CD8-positive, alpha-beta memory T cell (primary cell): ENCODE measurements at regions of chrX and their contacts with region 1.

Region 1: GRCh38 chrX:154428176-154429010 is at the start of gene ATP6AP1:
- DNase-seq: peak; percentile 77 to 93 (median 87)
- H3K4me3 ChIP-seq: peak within 1 kb of the TSS; percentile 59
- H3K4me3 Mint-ChIP-seq: peak within 1 kb of the TSS; percentile 74 to 92 (median 83)
- H3K27ac ChIP-seq: peak within 1 kb of the TSS; percentile 61
- H3K27ac Mint-ChIP-seq: peak within 1 kb of the TSS; percentile 65 to 93 (median 87)
- H3K4me1 ChIP-seq: peaks cover 14% of the 10 kb centered on the region
- H3K4me1 Mint-ChIP-seq: peaks cover 21 to 26% (median 21%) of the 10 kb centered on the region in 3 donors
- H3K27me3 ChIP-seq: no peaks in the 10 kb centered on the region
- H3K27me3 Mint-ChIP-seq: peaks cover 0 to 2% of the 10 kb centered on the region in 2 donors
- total RNA-seq, gene ATP6AP1: 43.0 to 43.2 TPM

Region 2: DNA sequence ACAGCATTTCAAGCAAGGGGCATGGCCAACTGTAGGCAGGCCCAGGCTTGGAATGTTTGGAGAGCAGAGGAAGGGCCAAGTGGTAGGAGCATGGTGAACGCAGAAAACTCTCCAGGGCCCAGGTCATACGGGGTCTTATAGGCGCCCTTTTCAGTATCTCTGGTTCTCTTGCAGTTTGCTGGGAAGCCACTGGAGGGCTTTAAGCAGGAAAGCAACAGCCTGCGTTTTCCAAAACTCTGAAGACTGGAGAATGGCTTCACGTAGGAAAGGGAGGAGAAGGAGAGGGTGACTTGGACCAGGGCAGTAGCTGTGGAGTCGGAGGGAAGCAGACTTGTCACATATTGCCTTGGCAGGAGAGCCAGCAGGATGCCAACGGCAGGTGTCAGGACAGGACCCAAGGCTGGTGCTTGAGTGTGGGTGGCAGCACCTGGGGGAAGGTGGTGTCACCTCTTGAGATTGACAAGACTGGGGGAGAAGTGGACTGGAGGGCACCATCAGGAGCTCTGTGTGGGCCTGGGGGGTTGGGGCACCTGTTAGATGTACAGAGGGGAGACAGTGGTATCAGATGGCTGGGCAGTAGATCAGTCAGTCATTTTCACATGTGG is 110.9 kb before region 1 on chrX:
- CTCF ChIA-PET with region 1: no interaction called
- POLR2A ChIA-PET with region 1: no interaction called
- DNase-seq: peak in 1 of 5 donors; percentile 17
- H3K4me3 ChIP-seq: no peak overlapping the region
- H3K4me3 Mint-ChIP-seq: peak overlapping the region in 3 of 7 donors; percentile 29 to 81 (median 29)
- H3K27ac ChIP-seq: no peak overlapping the region
- H3K27ac Mint-ChIP-seq: peak overlapping the region in 3 of 8 donors; percentile 34 to 92 (median 37)
- H3K4me1 ChIP-seq: peaks cover 26% of the 10 kb centered on the region
- H3K4me1 Mint-ChIP-seq: peaks cover 33 to 50% (median 43%) of the 10 kb centered on the region in 3 donors
- H3K27me3 ChIP-seq: no peaks in the 10 kb centered on the region
- H3K27me3 Mint-ChIP-seq: peaks cover 0 to 11% of the 10 kb centered on the region in 2 donors

Region 3: GRCh38 chrX:154411322-154411980 is 16.9 kb before region 1 on chrX and contains the start of gene TAFAZZIN:
- CTCF ChIA-PET with region 1: interaction called, 5 read pairs
- POLR2A ChIA-PET with region 1: interaction called, 12 read pairs
- DNase-seq: peak; percentile 59 to 83 (median 70)
- H3K4me3 ChIP-seq: peak within 1 kb of the TSS; percentile 59
- H3K4me3 Mint-ChIP-seq: peak within 1 kb of the TSS; percentile 85 to 98 (median 89)
- H3K27ac ChIP-seq: peak within 1 kb of the TSS; percentile 59
- H3K27ac Mint-ChIP-seq: peak within 1 kb of the TSS; percentile 80 to 99 (median 92)
- H3K4me1 ChIP-seq: peaks cover 9% of the 10 kb centered on the region
- H3K4me1 Mint-ChIP-seq: peaks cover 7 to 23% (median 10%) of the 10 kb centered on the region in 3 donors
- H3K27me3 ChIP-seq: no peaks in the 10 kb centered on the region
- H3K27me3 Mint-ChIP-seq: peaks cover 0 to 5% of the 10 kb centered on the region in 2 donors
- total RNA-seq, gene TAFAZZIN: 51.9 to 52.3 TPM

Region 4: DNA sequence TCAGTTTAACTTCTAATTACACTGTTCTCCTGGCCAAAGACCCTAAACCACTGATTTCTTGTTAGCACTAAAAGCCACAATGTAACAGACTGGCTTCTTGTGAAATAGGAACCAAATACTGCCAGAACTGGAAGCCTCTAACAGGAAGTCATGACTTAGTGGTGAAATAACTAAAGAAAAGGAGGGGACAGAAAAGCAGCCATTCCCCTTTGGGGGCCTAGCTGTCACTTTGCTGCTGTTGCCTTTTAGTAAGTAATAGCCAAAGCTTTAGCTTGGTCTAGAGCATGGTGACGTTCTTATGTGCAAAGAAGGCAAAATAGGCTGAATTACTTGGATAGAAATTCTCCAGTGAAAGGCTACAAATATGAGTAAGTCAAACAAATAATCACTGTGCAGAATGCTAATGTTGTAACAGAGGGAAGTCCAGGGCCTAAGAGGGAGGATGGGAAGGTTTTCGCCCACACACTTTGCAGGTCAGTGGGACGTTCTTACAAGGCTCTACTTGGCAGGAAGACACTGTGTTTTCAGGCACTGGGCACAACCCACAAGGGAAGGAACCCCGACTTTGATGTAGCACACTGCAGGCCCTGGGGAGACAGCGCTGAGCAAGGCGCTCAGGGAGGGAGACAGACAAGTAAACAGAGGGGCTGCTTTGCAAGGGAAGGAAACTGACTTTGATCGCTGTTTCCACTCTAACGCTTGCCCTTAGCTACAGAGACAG is 305.8 kb after region 1 on chrX:
- CTCF ChIA-PET with region 1: no interaction called
- POLR2A ChIA-PET with region 1: no interaction called
- DNase-seq: peak; percentile 17 to 66 (median 57)
- H3K4me3 ChIP-seq: peak overlapping the region; percentile 43
- H3K4me3 Mint-ChIP-seq: peak overlapping the region; percentile 66 to 84 (median 81)
- H3K27ac ChIP-seq: peak overlapping the region; percentile 61
- H3K27ac Mint-ChIP-seq: peak overlapping the region; percentile 87 to 98 (median 93)
- H3K4me1 ChIP-seq: peaks cover 90% of the 10 kb centered on the region
- H3K4me1 Mint-ChIP-seq: peaks cover 95 to 98% (median 98%) of the 10 kb centered on the region in 3 donors
- H3K27me3 ChIP-seq: no peaks in the 10 kb centered on the region
- H3K27me3 Mint-ChIP-seq: peaks cover 0 to 1% of the 10 kb centered on the region in 2 donors